ENCODE measurements at regions of chr17 and their contacts with region 1.

Region 1: DNA sequence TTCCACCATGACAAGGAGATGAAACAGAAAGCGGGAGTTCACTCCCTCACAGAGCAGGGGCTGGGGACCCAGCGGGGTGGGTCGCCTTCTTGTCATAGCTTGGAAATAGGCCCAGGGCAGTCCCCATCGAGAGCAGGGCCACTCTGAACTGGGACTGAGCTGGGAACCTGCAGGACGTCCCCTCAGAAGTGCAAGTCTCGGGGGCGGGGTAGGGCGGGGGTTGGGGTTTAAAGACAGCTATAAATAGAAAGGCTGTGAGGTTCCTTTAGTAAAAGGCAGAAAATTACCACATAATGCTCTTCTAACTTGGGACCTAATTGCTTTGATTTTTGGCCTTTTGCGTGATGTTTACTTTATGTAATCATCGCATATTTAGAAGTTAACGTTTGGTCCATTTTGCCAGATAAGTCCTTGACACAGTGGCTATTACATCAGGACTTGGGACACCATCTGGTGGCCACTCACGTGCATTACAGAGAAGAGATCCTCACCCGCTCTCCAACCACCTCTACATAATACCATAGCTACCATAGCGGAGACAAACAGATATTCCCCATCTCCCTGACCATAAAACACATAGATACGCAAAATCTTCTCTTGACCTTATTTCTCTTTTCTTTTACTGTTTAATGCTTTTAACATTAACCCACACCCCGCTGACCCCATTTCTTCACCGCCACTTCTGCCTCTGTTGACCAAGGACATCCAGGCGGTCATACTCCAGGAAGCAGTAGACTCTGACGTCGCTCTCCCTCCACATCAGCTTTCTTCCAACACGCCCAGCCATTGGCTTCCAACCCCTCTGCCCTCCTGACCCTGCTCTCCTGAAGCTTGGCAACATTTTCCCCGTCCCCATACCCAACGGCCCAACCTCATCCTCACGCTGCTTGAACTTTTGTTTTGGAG is 27.5 kb upstream of the PIK3R6 start:
- DNase-seq: peak in 4 of 6 donors; percentile 45 to 69 (median 56)
- ATAC-seq: peak; percentile 89 to 98 (median 95)
- H3K4me3 ChIP-seq: no peak overlapping the region
- H3K27ac ChIP-seq: no peak overlapping the region
- H3K4me1 ChIP-seq: no peaks in the 10 kb centered on the region
- H3K27me3 ChIP-seq: no peaks in the 10 kb centered on the region
- CTCF ChIP-seq: peak; percentile 70 to 74 (median 72)

Region 2: GRCh38 chr17:8806926-8807550 is 87.9 kb before region 1 on chr17:
- intact Hi-C with region 1: loop called in 1 of 3 experiments (anchors 10 kb)
- DNase-seq: no peak
- ATAC-seq: peak in 2 of 4 donors; percentile 44 to 76
- H3K4me3 ChIP-seq: no peak overlapping the region
- H3K27ac ChIP-seq: peak overlapping the region in 1 of 4 donors; percentile 0
- H3K4me1 ChIP-seq: no peaks in the 10 kb centered on the region
- H3K27me3 ChIP-seq: no peaks in the 10 kb centered on the region
- CTCF ChIP-seq: no peak

Measured in pancreas (tissue), 10 donors.